OCI-LY7 (cell line): ENCODE measurements at regions of chr2 and their contacts with region 1.

Region 1: DNA sequence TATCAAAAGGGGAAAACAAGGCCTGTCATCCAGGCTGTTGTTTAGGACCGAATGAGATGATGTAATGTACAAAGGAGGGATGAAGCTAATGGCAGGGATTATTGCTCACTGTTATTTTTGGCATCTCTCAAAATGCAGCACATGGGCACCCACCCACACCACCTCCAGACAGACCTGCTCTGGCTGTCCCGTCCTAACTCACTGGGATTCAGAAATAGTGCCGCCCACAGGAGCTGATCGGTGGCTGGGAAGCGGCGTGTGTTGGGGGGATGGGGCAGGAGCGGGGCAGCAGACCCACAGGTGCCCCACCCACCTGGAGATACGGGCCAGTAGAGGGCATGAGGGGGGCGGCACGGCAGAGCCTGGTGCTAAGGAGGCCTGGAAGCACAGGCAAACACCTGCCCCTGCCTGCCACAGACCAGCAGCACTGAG is 52.2 kb downstream of the CRACDL start:
- DNase-seq: no peak
- H3K4me3 ChIP-seq: no peak overlapping the region
- H3K27ac ChIP-seq: no peak overlapping the region
- H3K4me1 ChIP-seq: no peaks in the 10 kb centered on the region
- CTCF ChIP-seq: no peak

Region 2: DNA sequence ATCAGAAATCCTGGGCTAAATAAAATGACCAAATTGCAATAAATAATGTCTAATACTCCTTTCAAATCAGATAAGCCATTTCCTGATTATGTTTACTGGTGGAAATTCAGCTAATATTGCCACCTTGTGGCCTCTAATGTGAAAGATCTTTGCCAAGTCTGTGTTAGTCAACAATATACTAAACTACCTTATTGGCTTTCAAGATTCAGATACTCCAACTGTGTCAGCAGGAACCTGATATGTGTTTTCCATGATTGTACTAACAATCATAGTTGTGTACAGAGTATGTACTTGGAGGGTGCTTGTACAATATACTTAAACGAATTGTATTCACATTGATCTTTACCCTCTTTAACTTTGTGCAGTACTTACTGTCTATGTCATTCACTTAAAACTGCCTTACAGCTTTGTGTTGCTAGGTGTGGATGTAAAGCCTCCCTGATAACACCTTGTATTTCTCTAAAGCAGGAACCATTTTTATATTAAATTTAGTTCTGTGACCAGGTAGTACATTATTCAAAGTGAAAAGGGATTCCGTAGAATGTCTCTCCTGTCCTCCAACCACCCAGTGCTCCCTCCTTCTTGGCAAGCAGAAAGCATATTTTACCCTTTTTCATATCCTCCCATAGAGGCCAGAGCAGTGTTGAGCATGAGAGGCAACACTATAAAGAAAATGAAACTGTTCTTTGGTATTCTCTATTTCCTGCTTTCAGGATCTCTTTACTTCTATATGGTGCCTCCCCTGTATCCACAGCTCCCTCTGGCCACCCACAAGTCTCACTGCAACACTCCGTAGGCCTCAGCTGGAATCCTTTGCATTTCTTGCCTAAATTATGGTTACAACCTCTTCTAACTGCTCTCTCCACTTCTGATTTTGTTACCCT is 182.5 kb after region 1 on chr2:
- CTCF ChIA-PET with region 1: no interaction called
- POLR2A ChIA-PET with region 1: no interaction called
- intact Hi-C with region 1: loop called (anchors 5 kb)
- DNase-seq: peak; percentile 59
- H3K4me3 ChIP-seq: no peak overlapping the region
- H3K27ac ChIP-seq: no peak overlapping the region
- H3K4me1 ChIP-seq: peaks cover 9% of the 10 kb centered on the region
- CTCF ChIP-seq: peak; percentile 84

Region 3: DNA sequence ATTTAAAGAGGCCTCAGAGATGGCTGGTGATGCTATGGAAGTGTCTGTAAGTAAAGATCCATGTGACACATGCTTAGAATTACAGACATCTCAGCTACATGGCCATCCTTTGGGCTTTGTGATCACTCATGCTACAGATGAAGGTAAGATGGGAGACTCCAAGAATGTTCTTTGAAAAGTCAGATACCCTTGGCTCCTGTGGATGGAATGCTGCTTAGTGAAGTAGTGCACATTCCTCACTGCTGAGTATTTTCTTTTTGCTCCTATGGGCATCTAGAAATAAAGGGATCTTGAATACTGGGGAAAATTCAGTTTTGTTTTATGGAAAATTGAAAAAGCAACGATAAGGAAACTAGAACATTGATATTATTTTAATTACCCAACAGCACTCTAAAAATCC is 661.3 kb after region 1 on chr2:
- CTCF ChIA-PET with region 1: no interaction called
- POLR2A ChIA-PET with region 1: no interaction called
- intact Hi-C with region 1: no loop called
- DNase-seq: no peak
- H3K4me3 ChIP-seq: no peak overlapping the region
- H3K27ac ChIP-seq: no peak overlapping the region
- H3K4me1 ChIP-seq: no peaks in the 10 kb centered on the region
- CTCF ChIP-seq: no peak